AG04449 (cell line): ENCODE measurements at regions of chr9 and their contacts with region 1.

Region 1: GRCh38 chr9:75866273-75866871 is 24.1 kb upstream of the PCSK5 start:
- DNase-seq: no peak
- H3K4me3 ChIP-seq: no peak overlapping the region
- CTCF ChIP-seq: peak; percentile 57

Region 2: DNA sequence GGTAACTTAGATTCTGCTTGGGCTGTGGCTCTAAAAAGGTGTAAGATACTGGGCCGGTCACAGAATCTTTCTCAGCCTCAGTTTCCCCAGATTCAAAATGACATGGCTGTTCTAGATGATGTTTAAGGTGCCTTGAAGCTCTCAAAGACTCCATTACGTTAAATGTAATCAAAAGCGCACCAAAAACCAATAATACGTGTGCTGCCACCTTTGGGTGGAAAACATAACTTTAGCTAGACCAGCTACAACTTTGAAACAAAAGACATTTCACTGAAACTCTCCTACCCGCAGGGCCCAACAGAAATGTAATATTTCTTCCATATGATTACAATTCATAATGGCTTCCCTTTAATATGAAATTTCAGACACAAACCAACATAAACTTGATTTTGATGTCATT is 10.9 kb before region 1 on chr9:
- CTCF ChIA-PET with region 1: interaction called, 12 read pairs
- POLR2A ChIA-PET with region 1: no interaction called
- DNase-seq: no peak
- H3K4me3 ChIP-seq: no peak overlapping the region
- CTCF ChIP-seq: peak; percentile 2

Region 3: GRCh38 chr9:75880618-75881017 is 14.2 kb after region 1 on chr9:
- CTCF ChIA-PET with region 1: interaction called, 12 read pairs
- POLR2A ChIA-PET with region 1: no interaction called
- DNase-seq: no peak
- H3K4me3 ChIP-seq: no peak overlapping the region
- CTCF ChIP-seq: no peak